Activated CD4-positive, alpha-beta memory T cell treated with anti-CD3 and anti-CD28 coated beads for 36 hours (primary cell): ENCODE measurements at regions of chr1 and their contacts with region 1.

Region 1: GRCh38 chr1:91011726-91012125 is 10.1 kb downstream of the ZNF644 start:
- DNase-seq: no peak
- H3K4me3 Mint-ChIP-seq: no peak overlapping the region
- H3K27ac Mint-ChIP-seq: no peak overlapping the region
- H3K4me1 Mint-ChIP-seq: peaks cover 73% of the 10 kb centered on the region
- H3K27me3 Mint-ChIP-seq: no peaks in the 10 kb centered on the region

Region 2: GRCh38 chr1:90973897-90974798 is 37.6 kb before region 1 on chr1:
- CTCF ChIA-PET with region 1: no interaction called
- POLR2A ChIA-PET with region 1: no interaction called
- intact Hi-C with region 1: loop called (anchors 5 kb)
- DNase-seq: no peak
- H3K4me3 Mint-ChIP-seq: no peak overlapping the region
- H3K27ac Mint-ChIP-seq: no peak overlapping the region
- H3K4me1 Mint-ChIP-seq: peaks cover 38% of the 10 kb centered on the region
- H3K27me3 Mint-ChIP-seq: no peaks in the 10 kb centered on the region